HepG2 (cell line): ENCODE measurements at regions of chr6 and their contacts with region 1.

Region 1: DNA sequence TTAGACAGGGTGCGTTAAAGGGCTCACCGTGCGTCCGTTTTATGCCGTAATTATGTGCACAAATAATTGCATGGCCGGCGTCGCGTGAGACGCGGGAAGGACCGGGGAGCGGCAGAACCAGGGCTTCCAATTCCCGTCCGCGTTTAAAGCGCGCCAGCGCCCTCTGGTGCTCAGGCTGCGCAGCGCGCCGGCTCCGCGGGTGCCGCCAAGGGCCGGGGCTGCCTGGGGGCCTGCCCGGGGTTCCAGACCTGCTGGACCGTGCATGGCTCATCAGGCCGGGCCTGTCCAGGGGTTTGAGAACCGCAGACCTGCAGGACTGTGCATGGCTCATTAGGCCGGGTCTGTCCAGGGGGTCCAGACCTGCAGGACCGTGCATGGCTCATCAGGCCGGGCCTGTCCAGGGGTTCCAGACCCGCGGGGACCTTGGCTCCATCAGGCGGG is 369.0 kb downstream of the THBS2 start:
- DNase-seq: peak; percentile 32
- ATAC-seq: peak; percentile 94
- H3K4me3 ChIP-seq: no peak overlapping the region
- H3K27ac ChIP-seq: no peak overlapping the region
- H3K4me1 ChIP-seq: 0 out of 2 replicates have a peak, but pooled peaks cover 4% of the 10 kb centered on the region
- H3K27me3 ChIP-seq: peaks cover 6 to 76% of the 10 kb centered on the region in 2 experiments; a peak in 4 of 5 replicates
- CTCF ChIP-seq: peak; percentile 88
- EP300 ChIP-seq: no peak
- POLR2A ChIP-seq: no peak
- RAD21 ChIP-seq: peak; percentile 95

Region 2: GRCh38 chr6:168157272-168158007 is 727.2 kb before region 1 on chr6:
- CTCF ChIA-PET with region 1: no interaction called
- POLR2A ChIA-PET with region 1: no interaction called
- in situ Hi-C with region 1: loop called (anchors 10 kb)
- intact Hi-C with region 1: loop called (anchors 10 kb)
- DNase-seq: no peak
- ATAC-seq: peak; percentile 18; the same call in 1 of the 3 replicates
- H3K4me3 ChIP-seq: no peak overlapping the region
- H3K27ac ChIP-seq: no peak overlapping the region
- H3K4me1 ChIP-seq: peaks cover 52% of the 10 kb centered on the region
- H3K27me3 ChIP-seq: peaks cover 7 to 35% of the 10 kb centered on the region in 2 experiments; a peak in 4 of 5 replicates
- CTCF ChIP-seq: no peak
- EP300 ChIP-seq: no peak
- POLR2A ChIP-seq: no peak
- RAD21 ChIP-seq: no peak

Region 3: GRCh38 chr6:168370310-168370991 is 514.2 kb before region 1 on chr6:
- CTCF ChIA-PET with region 1: interaction called, 42 read pairs
- POLR2A ChIA-PET with region 1: no interaction called
- in situ Hi-C with region 1: loop called (anchors 5 kb)
- intact Hi-C with region 1: no loop called
- DNase-seq: peak; percentile 39
- ATAC-seq: peak; percentile 95
- H3K4me3 ChIP-seq: no peak overlapping the region
- H3K27ac ChIP-seq: no peak overlapping the region
- H3K4me1 ChIP-seq: peaks cover 5% of the 10 kb centered on the region; the same call in 1 of the 2 replicates
- H3K27me3 ChIP-seq: peaks cover 7 to 91% of the 10 kb centered on the region in 2 experiments
- CTCF ChIP-seq: peak; percentile 97
- EP300 ChIP-seq: no peak
- POLR2A ChIP-seq: no peak
- RAD21 ChIP-seq: peak; percentile 97

Region 4: GRCh38 chr6:169780571-169781091 is 896.0 kb after region 1 on chr6:
- CTCF ChIA-PET with region 1: no interaction called
- POLR2A ChIA-PET with region 1: no interaction called
- in situ Hi-C with region 1: no loop called
- intact Hi-C with region 1: no loop called
- DNase-seq: peak; percentile 52
- ATAC-seq: peak; percentile 85
- H3K4me3 ChIP-seq: no peak overlapping the region
- H3K27ac ChIP-seq: peak overlapping the region; percentile 7
- H3K4me1 ChIP-seq: peaks cover 20% of the 10 kb centered on the region
- H3K27me3 ChIP-seq: no peaks in the 10 kb centered on the region
- CTCF ChIP-seq: 0 out of 2 replicates have a peak, but pooled peaks have one; percentile 2
- EP300 ChIP-seq: peak in 1 of 2 experiments; percentile 9; a peak in 1 of 4 replicates
- POLR2A ChIP-seq: no peak
- RAD21 ChIP-seq: no peak